HEK293 (cell line): ENCODE measurements at regions of chr6 and their contacts with region 1.

Region 1: DNA sequence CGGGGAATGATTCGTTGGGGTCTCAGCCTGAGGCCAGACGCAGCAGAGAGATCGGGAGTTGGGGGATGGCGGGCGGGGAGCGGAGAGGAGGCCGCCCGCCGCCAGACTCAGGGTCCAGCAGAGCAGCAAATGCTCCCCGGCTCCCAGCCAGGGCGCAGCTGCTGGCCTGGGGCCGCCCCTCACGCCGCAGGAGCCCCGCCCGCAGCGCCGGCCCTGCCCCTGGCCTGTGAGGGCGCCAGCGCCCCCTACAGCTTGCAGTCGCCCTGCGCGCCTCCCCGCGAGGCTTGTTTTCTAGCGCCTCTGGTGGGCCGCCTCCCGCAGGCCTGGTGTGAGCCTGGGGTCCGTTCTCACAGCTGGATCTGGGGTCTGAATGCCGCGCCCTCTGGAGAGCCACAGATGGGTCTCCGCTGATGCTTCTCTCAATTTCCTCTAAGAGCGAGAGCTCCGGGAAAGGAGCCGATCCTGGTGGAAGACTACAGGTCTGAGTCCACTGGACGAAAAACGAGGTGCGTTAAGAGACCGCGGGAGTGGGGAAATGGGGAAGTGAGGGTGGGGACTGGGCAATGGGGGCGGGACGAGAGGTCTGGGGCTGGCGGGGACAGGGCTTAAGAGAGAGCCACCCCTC is 29.9 kb downstream of the TRIM38 start:
- H3K4me3 ChIP-seq: peak overlapping the region; percentile 55
- H3K27ac ChIP-seq: peak overlapping the region; percentile 62
- H3K4me1 ChIP-seq: no peaks in the 10 kb centered on the region
- CTCF ChIP-seq: peak; percentile 97

Region 2: DNA sequence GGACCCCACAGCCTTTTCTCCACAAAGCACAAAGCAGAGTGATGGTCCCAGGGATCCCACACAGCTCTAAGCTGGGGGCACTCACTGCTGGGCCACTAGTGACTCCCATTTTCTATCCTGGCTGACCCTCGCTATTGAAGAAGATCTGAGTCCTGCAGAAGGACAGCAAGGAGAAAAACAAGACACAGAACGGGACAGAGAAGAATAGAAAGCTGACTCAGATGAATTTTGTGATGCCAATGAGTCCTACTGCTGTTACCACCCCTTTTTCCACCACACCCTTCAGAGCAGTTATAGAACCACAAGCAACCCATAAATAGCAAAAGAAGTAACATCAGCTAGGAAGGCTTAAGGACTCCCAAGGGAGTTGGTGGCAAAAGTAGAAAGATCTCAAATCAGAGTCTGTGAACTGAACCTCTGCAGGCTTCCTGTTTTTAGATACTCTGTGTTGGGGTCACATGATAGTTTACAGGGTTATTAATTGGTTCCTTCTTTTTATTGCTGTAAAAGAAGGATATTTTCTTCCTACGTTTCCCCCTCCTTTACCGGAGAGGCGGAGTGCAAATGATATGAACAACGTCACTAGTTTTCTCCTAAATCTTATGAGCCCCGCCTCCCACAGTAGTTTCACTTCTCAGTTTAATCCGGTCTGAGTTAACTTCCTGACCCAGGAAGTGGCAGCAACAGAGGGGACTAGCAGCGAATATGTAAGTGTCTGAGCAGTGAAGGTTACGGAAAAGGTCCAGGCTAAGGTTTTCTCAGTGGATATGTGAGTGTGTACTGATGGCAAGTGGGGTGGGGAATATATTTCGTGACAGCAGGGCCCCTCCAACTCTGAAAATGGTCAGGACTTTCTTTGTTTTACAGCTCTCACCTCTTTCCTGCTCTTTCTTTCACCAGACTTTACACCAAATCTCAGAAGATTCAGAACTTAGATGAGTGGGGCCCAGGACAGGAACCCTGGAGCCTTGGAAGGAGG is 30.1 kb before region 1 on chr6 and contains the start of gene TRIM38:
- CTCF ChIA-PET with region 1: interaction called, 18 read pairs
- POLR2A ChIA-PET with region 1: interaction called, 13 read pairs
- H3K4me3 ChIP-seq: peak within 1 kb of the TSS; percentile 56
- H3K27ac ChIP-seq: peak within 1 kb of the TSS; percentile 84
- H3K4me1 ChIP-seq: peaks cover 12% of the 10 kb centered on the region; the same call in 1 of the 2 replicates
- CTCF ChIP-seq: no peak

Region 3: DNA sequence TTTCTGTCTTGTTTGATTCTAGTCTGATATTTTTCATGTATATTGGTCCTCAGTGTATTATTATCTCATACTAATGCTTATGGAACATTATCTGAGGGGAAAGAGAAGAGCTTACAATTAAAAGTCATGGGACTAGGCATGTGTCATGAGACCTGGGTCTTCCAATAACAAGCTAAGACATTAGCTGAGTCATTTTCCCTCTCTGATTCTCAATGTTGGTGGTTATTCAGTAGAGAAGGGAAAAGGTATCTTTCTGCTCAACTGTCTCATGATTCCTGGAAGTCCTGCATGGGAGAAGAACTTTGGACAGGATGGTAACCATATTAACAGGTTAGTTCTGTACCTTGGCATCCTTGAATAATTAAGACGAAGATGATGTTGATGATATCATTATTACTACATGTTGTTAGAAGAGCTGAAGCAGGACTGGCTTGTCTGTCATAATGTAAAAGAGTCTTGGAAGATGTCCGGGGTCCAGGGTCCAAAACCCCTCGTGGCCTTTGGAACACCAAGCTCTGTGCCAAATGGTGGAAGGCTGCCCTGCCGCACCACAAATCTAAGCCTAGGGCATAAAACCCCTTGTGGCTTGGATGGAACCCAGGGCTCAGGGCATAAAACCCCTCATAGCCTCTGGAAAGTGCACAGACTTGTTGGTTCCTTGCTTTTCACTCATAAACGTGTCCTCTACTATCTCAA is 10.8 kb before region 1 on chr6:
- CTCF ChIA-PET with region 1: interaction called, 34 read pairs
- POLR2A ChIA-PET with region 1: interaction called, 3 read pairs
- H3K4me3 ChIP-seq: no peak overlapping the region
- H3K27ac ChIP-seq: no peak overlapping the region
- H3K4me1 ChIP-seq: no peaks in the 10 kb centered on the region
- CTCF ChIP-seq: no peak

Region 4: GRCh38 chr6:26012061-26012460 is 19.5 kb after region 1 on chr6:
- CTCF ChIA-PET with region 1: interaction called, 61 read pairs
- POLR2A ChIA-PET with region 1: interaction called, 10 read pairs
- H3K4me3 ChIP-seq: no peak overlapping the region
- H3K27ac ChIP-seq: no peak overlapping the region
- H3K4me1 ChIP-seq: 0 out of 2 replicates have a peak, but pooled peaks cover 4% of the 10 kb centered on the region
- CTCF ChIP-seq: no peak

Region 5: GRCh38 chr6:26025894-26026832 is 33.6 kb after region 1 on chr6:
- CTCF ChIA-PET with region 1: interaction called, 61 read pairs
- POLR2A ChIA-PET with region 1: interaction called, 58 read pairs
- H3K4me3 ChIP-seq: peak overlapping the region; percentile 48
- H3K27ac ChIP-seq: peak overlapping the region; percentile 47
- H3K4me1 ChIP-seq: peaks cover 18% of the 10 kb centered on the region
- CTCF ChIP-seq: peak; percentile 81

Region 6: DNA sequence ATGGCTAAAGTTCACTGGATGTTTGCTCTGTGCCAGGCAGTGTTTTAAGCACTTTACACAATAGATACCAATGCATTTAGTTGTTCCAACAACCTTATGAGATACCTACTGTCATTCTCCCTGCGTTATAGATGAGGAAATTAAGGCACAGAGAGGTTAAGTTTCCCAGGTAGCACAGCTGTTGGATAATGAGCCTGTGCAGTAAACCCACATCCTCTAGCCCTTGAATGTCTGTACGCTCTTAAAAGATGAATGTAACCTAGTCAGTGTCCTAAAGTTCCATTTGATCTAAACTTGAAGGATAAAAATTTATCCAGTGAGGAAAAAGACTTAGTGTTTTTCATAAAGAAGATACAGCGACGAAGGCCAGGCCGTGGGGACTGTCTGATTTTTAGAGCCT is 122.7 kb after region 1 on chr6:
- CTCF ChIA-PET with region 1: no interaction called
- POLR2A ChIA-PET with region 1: no interaction called
- H3K4me3 ChIP-seq: no peak overlapping the region
- H3K27ac ChIP-seq: no peak overlapping the region
- H3K4me1 ChIP-seq: no peaks in the 10 kb centered on the region
- CTCF ChIP-seq: no peak

Region 7: GRCh38 chr6:26130254-26131249 is 138.0 kb after region 1 on chr6:
- CTCF ChIA-PET with region 1: no interaction called
- POLR2A ChIA-PET with region 1: no interaction called
- H3K4me3 ChIP-seq: no peak overlapping the region
- H3K27ac ChIP-seq: no peak overlapping the region
- H3K4me1 ChIP-seq: no peaks in the 10 kb centered on the region
- CTCF ChIP-seq: no peak